CD8-positive, alpha-beta T cell (primary cell): ENCODE measurements at regions of chr19 and their contacts with region 1.

Region 1: DNA sequence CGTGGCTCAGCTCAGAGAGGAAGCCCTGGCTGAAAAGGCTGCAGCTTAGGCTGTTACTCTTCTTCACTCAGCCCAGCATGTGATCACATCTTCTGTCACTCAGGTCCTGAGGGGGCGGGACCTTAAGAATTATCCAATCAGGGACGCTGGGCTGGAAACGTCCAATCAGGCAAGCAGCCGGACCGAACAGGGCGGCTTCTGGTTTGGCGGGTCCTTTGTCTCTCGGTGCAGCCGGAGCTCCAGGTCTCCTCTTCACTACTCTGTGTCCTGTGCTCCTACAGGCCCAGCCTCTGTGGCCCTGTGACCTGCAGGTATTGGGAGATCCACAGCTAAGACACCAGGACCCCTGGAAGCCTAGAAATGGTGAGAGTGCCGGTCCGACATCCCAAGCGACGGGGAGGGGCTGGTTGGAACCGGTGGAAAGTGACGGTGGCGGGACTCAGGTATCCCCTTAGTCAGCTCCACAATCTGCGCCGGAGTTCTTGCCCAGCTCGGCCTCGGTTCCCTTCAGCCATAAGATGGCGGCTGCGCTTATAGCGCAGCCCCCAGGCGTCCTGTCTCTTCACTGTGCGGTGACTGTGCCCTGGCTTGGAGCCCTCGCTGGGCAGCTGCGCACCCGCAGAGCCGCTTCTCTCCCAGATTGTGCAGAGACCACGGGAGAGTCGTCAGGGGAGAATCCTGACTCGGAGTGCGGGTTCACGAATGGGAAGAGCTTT is at the start of gene ZNF93:
- DNase-seq: peak; percentile 83 to 95 (median 91)
- ATAC-seq: peak; percentile 97
- H3K4me3 ChIP-seq: peak within 1 kb of the TSS; percentile 86 to 95
- H3K4me3 Mint-ChIP-seq: peak within 1 kb of the TSS; percentile 94
- H3K27ac ChIP-seq: peak within 1 kb of the TSS; percentile 46 to 75
- H3K27ac Mint-ChIP-seq: peak within 1 kb of the TSS; percentile 91
- H3K4me1 ChIP-seq: peaks cover 10% of the 10 kb centered on the region
- H3K4me1 Mint-ChIP-seq: peaks cover 38% of the 10 kb centered on the region
- H3K27me3 ChIP-seq: no peaks in the 10 kb centered on the region
- H3K27me3 Mint-ChIP-seq: no peaks in the 10 kb centered on the region
- CTCF ChIP-seq: no peak
- total RNA-seq, gene ZNF93: 5.9 to 6.8 TPM

Region 2: DNA sequence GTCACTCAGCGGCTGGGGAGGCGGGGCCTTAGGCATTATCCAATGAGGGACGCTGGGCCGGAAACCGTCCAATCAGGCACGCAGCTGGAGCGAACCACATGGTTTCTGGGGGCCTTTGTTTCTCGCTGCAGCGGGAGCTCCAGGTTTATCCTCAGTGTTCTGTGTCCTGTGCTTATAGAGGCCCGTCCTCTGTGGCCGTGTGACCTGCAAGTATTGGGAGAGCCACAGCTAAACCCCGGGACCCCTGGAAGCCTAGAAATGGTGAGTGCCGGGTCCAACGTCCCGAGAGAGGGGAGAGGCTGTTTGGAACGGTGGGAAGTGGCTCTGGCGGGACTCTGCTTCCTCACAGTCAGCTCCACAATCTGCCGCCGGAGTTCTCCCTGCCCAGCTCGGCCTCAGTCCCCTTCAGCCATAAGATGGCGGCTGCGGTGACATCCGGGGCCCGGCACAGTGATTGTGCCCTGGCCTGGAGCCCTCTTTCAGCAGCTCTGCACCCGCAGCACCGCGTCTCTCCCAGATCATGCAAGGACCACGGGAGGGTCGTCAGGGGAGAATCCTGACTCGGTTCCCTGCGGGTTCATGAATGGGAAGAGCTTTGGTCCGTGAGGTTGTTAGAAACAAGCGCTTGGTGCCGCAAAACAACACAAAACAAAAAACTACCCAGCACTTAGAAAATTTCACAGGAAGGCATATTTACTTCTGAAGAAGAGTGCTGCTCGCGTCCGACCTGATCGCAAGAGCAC is 35.0 kb before region 1 on chr19 and contains the start of gene ZNF253:
- CTCF ChIA-PET with region 1: interaction called, 8 read pairs
- POLR2A ChIA-PET with region 1: interaction called, 31 read pairs
- intact Hi-C with region 1: loop called (anchors 1 to 2 kb)
- DNase-seq: peak; percentile 88 to 97 (median 95)
- ATAC-seq: peak; percentile 93
- H3K4me3 ChIP-seq: peak within 1 kb of the TSS; percentile 89 to 99
- H3K4me3 Mint-ChIP-seq: peak within 1 kb of the TSS; percentile 100
- H3K27ac ChIP-seq: peak within 1 kb of the TSS; percentile 89 to 91
- H3K27ac Mint-ChIP-seq: peak within 1 kb of the TSS; percentile 98
- H3K4me1 ChIP-seq: peaks cover 22% of the 10 kb centered on the region
- H3K4me1 Mint-ChIP-seq: peaks cover 39% of the 10 kb centered on the region
- H3K27me3 ChIP-seq: no peaks in the 10 kb centered on the region
- H3K27me3 Mint-ChIP-seq: no peaks in the 10 kb centered on the region
- CTCF ChIP-seq: no peak
- total RNA-seq, gene ZNF253: 2.6 to 3.2 TPM

Region 3: DNA sequence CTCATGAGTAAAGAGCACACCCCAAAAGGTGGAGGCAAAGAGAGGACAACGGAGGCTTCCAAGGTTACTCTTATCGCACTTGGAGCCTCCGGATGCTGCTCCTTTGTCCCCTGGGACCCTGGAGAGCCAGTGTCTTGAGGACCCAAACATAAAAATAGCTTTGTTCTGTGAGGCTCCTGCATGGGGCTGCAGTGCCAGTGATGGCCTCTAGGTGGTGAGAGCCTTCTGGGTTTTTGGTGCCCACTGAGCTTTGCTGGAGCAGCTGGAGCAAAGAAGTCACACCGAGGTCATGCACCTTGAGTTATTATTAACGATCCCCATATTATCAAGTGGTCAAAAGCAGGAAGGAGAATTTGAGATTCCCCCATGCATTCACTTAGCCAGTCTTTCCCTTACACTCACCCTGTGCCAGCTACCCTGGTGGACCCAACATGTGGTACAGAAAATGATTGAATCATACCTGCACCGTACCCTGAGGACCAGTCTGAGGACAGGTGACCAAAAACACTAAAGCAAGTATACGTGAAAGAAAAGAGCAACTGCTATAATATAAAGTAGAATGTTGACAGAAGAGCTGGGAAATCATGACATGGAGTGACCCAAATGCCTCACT is 96.9 kb after region 1 on chr19:
- CTCF ChIA-PET with region 1: no interaction called
- POLR2A ChIA-PET with region 1: no interaction called
- intact Hi-C with region 1: no loop called
- DNase-seq: peak in 8 of 9 experiments; percentile 2 to 62 (median 37)
- ATAC-seq: peak; percentile 61
- H3K4me3 ChIP-seq: no peak overlapping the region
- H3K4me3 Mint-ChIP-seq: no peak overlapping the region
- H3K27ac ChIP-seq: no peak overlapping the region
- H3K27ac Mint-ChIP-seq: no peak overlapping the region
- H3K4me1 ChIP-seq: no peaks in the 10 kb centered on the region
- H3K4me1 Mint-ChIP-seq: no peaks in the 10 kb centered on the region
- H3K27me3 ChIP-seq: no peaks in the 10 kb centered on the region
- H3K27me3 Mint-ChIP-seq: no peaks in the 10 kb centered on the region
- CTCF ChIP-seq: peak; percentile 86

Region 4: GRCh38 chr19:20051841-20052768 is 151.2 kb after region 1 on chr19:
- CTCF ChIA-PET with region 1: no interaction called
- POLR2A ChIA-PET with region 1: no interaction called
- intact Hi-C with region 1: loop called in 1 of 2 experiments (anchors 5 kb)
- DNase-seq: peak; percentile 10 to 78 (median 56)
- ATAC-seq: peak; percentile 93
- H3K4me3 ChIP-seq: peak overlapping the region; percentile 80 to 87
- H3K4me3 Mint-ChIP-seq: peak overlapping the region; percentile 99
- H3K27ac ChIP-seq: peak overlapping the region; percentile 37 to 72
- H3K27ac Mint-ChIP-seq: peak overlapping the region; percentile 91
- H3K4me1 ChIP-seq: peaks cover 6% of the 10 kb centered on the region
- H3K4me1 Mint-ChIP-seq: peaks cover 13% of the 10 kb centered on the region
- H3K27me3 ChIP-seq: peaks cover 0 to 2% of the 10 kb centered on the region in 2 experiments
- H3K27me3 Mint-ChIP-seq: peaks cover 3% of the 10 kb centered on the region
- CTCF ChIP-seq: no peak

Region 5: GRCh38 chr19:20162821-20163220 is 261.9 kb after region 1 on chr19:
- CTCF ChIA-PET with region 1: no interaction called
- POLR2A ChIA-PET with region 1: no interaction called
- intact Hi-C with region 1: no loop called
- DNase-seq: peak in 2 of 9 experiments; percentile 28 to 46
- ATAC-seq: no peak
- H3K4me3 ChIP-seq: no peak overlapping the region
- H3K4me3 Mint-ChIP-seq: no peak overlapping the region
- H3K27ac ChIP-seq: no peak overlapping the region
- H3K27ac Mint-ChIP-seq: no peak overlapping the region
- H3K4me1 ChIP-seq: peaks cover 15% of the 10 kb centered on the region
- H3K4me1 Mint-ChIP-seq: peaks cover 35% of the 10 kb centered on the region
- H3K27me3 ChIP-seq: no peaks in the 10 kb centered on the region
- H3K27me3 Mint-ChIP-seq: no peaks in the 10 kb centered on the region
- CTCF ChIP-seq: no peak